Gastrocnemius medialis (tissue), 4 donors: ENCODE measurements at regions of chr9 and their contacts with region 1.

Region 1: GRCh38 chr9:122931226-122932121 is at the start of gene ZBTB26:
- DNase-seq: peak; percentile 93
- ATAC-seq: peak; percentile 99 to 100
- H3K4me3 ChIP-seq: peak within 1 kb of the TSS; percentile 91 to 98 (median 94)
- H3K27ac ChIP-seq: peak within 1 kb of the TSS; percentile 86 to 94 (median 90)
- H3K4me1 ChIP-seq: peaks cover 41 to 45% of the 10 kb centered on the region in 2 donors
- H3K27me3 ChIP-seq: no peaks in the 10 kb centered on the region
- CTCF ChIP-seq: peak in 1 of 5 experiments; percentile 4
- POLR2A ChIP-seq: peak; percentile 48 to 55
- total RNA-seq, gene ZBTB26: 1.6 to 6.3 (median 2.6) TPM

Region 2: DNA sequence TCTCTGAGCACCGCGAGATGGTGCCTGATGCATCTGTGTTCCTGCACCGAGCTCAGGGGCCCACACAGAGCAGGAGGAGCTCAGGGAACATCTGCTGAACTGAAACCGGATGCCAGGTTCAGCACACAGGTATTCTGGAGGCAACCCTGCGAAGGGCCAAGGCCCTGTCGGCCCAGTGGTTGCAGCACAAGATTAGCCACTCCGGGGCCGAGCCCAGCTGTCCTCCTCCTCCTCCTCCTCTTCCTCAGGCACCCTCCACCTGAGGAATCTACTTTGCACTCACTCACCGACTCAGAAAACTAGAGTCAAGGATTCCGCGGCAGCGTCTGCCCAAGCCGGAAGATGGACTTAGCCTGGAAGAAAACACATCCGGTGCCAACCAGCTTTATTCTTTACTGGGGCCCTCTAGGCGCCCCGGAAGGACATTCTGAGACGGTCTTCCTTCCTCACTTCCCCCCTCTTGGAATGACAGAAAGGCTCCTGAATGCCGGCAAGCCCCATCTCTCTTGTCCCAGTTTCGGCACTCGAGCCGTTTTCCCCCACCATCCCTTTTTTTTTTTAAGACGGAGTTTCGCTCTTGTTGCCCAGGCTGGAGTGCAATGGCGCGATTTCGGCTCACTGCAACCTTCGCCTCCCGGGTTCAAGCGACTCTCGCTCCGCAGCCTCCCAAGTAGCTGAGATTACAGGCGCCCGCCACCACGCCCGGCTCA is 18.4 kb before region 1 on chr9 and contains the start of gene ZBTB6:
- in situ Hi-C with region 1: no loop called
- intact Hi-C with region 1: loop called (anchors 1 kb)
- DNase-seq: peak; percentile 66 to 73
- ATAC-seq: peak; percentile 99
- H3K4me3 ChIP-seq: peak within 1 kb of the TSS; percentile 67 to 99 (median 90)
- H3K27ac ChIP-seq: peak within 1 kb of the TSS; percentile 74 to 90 (median 83)
- H3K4me1 ChIP-seq: peaks cover 13 to 14% of the 10 kb centered on the region in 2 donors
- H3K27me3 ChIP-seq: no peaks in the 10 kb centered on the region
- CTCF ChIP-seq: no peak
- POLR2A ChIP-seq: peak in 1 of 2 donors; percentile 40
- total RNA-seq, gene ZBTB6: 4.5 to 12.0 (median 7.8) TPM